Activated CD4-positive, alpha-beta T cell treated with anti-CD3 and anti-CD28 coated beads for 36 hours (primary cell): ENCODE measurements at regions of chr15 and their contacts with region 1.

Region 1: GRCh38 chr15:60507596-60508424 is 28.9 kb upstream of the ICE2 start:
- DNase-seq: peak; percentile 62
- ATAC-seq: peak; percentile 68
- H3K4me3 Mint-ChIP-seq: no peak overlapping the region
- H3K27ac Mint-ChIP-seq: peak overlapping the region; percentile 34
- H3K4me1 Mint-ChIP-seq: peaks cover 52% of the 10 kb centered on the region
- H3K27me3 Mint-ChIP-seq: no peaks in the 10 kb centered on the region

Region 2: DNA sequence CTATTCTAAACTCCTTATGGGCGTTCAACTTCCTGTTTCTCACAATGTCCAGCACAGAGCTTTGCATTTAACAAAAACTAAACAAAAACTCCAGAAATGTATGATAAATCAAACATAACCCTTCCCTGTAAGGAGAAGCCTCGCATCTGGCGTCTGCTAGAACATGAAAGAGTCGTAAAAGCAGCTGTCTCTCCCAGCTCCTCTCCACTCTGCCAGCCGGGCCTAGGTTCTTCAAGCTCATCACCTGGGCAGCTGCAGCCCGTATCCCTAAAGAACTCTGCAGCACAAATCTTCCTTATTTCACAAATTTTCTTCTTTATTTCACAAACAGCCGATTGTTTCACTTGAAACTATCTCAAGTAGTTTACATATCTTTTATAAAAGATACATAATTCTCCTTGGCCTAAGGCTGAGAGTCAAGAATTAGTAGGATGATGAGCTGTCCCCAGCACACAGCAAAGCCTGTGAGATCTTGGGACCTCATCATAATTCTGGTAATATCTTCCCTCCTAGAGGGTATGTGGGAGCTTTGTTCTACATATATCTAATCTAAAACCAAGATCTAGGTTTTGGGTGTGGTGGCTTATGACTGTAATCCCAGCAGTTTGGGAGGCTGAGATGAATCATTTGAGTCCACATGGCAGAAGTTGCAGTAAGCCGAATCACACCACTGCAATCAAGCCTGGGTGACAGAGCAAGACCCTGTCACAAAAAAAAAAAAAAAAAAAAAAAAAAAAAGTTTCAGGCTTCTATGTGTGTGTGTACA is 145.3 kb before region 1 on chr15:
- CTCF ChIA-PET with region 1: interaction called, 6 read pairs
- POLR2A ChIA-PET with region 1: no interaction called
- intact Hi-C with region 1: loop called (anchors 2 to 5 kb)
- DNase-seq: peak; percentile 74
- ATAC-seq: peak; percentile 97
- H3K4me3 Mint-ChIP-seq: no peak overlapping the region
- H3K27ac Mint-ChIP-seq: peak overlapping the region; percentile 53
- H3K4me1 Mint-ChIP-seq: peaks cover 18% of the 10 kb centered on the region
- H3K27me3 Mint-ChIP-seq: no peaks in the 10 kb centered on the region

Region 3: DNA sequence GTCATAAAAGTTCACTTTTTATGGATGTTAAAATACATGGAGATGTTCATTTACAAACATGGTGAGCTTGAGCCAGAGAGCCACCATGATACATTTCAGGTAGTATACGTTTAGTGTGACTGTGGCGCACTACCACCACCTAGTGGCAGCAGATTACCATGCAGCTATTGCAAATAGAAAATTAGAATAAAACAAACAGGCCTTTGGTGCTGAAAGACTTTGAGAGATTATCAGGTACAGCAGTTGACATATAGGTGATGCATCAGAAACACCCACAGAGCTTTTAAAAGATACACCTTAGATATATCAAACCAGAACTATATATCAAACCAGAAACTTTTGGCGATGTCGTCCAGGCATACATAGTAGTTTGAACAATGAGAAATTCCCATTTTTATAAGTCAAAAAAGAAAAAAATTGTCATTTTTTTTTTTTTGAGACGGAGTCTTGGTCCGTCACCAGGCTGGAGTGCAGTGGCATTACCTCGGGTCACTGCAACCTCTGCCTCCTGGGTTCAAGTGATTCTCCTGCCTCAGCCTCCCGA is 13.1 kb after region 1 on chr15:
- CTCF ChIA-PET with region 1: interaction called, 102 read pairs
- POLR2A ChIA-PET with region 1: interaction called, 6 read pairs
- intact Hi-C with region 1: loop called (anchors 1 kb)
- DNase-seq: peak; percentile 90
- ATAC-seq: peak; percentile 68
- H3K4me3 Mint-ChIP-seq: no peak overlapping the region
- H3K27ac Mint-ChIP-seq: peak overlapping the region; percentile 41
- H3K4me1 Mint-ChIP-seq: peaks cover 45% of the 10 kb centered on the region
- H3K27me3 Mint-ChIP-seq: no peaks in the 10 kb centered on the region

Region 4: GRCh38 chr15:60649845-60650548 is 142.2 kb after region 1 on chr15:
- CTCF ChIA-PET with region 1: interaction called, 4 read pairs
- POLR2A ChIA-PET with region 1: no interaction called
- intact Hi-C with region 1: loop called in 1 of 2 experiments (anchors 5 kb)
- DNase-seq: peak; percentile 68
- ATAC-seq: peak; percentile 89
- H3K4me3 Mint-ChIP-seq: peak overlapping the region; percentile 27
- H3K27ac Mint-ChIP-seq: peak overlapping the region; percentile 82
- H3K4me1 Mint-ChIP-seq: peaks cover 47% of the 10 kb centered on the region
- H3K27me3 Mint-ChIP-seq: no peaks in the 10 kb centered on the region

Region 5: GRCh38 chr15:60916679-60917460 is 409.1 kb after region 1 on chr15:
- CTCF ChIA-PET with region 1: interaction called, 18 read pairs
- POLR2A ChIA-PET with region 1: no interaction called
- intact Hi-C with region 1: loop called (anchors 1 kb)
- DNase-seq: peak; percentile 94
- ATAC-seq: peak; percentile 94
- H3K4me3 Mint-ChIP-seq: no peak overlapping the region
- H3K27ac Mint-ChIP-seq: peak overlapping the region; percentile 51
- H3K4me1 Mint-ChIP-seq: peaks cover 27% of the 10 kb centered on the region
- H3K27me3 Mint-ChIP-seq: no peaks in the 10 kb centered on the region

Region 6: GRCh38 chr15:61834076-61834697 is 1326.4 kb after region 1 on chr15:
- CTCF ChIA-PET with region 1: interaction called, 4 read pairs
- POLR2A ChIA-PET with region 1: no interaction called
- intact Hi-C with region 1: loop called (anchors 5 to 10 kb)
- DNase-seq: peak; percentile 85
- ATAC-seq: peak; percentile 74
- H3K4me3 Mint-ChIP-seq: no peak overlapping the region
- H3K27ac Mint-ChIP-seq: no peak overlapping the region
- H3K4me1 Mint-ChIP-seq: peaks cover 2% of the 10 kb centered on the region
- H3K27me3 Mint-ChIP-seq: peaks cover 19% of the 10 kb centered on the region